Activated CD8-positive, alpha-beta memory T cell treated with anti-CD3 and anti-CD28 coated beads, Interleukin-2, amount 10 ng/mL, durations not matched to agents 7 days and 5 days (primary cell): ENCODE measurements at regions of chr6 and their contacts with region 1.

Region 1: GRCh38 chr6:105388152-105388791 is 14.6 kb downstream of the PREP start:
- DNase-seq: no peak
- ATAC-seq: no peak
- H3K4me3 Mint-ChIP-seq: no peak overlapping the region
- H3K27ac Mint-ChIP-seq: no peak overlapping the region
- H3K4me1 Mint-ChIP-seq: peaks cover 12% of the 10 kb centered on the region
- H3K27me3 Mint-ChIP-seq: no peaks in the 10 kb centered on the region

Region 2: DNA sequence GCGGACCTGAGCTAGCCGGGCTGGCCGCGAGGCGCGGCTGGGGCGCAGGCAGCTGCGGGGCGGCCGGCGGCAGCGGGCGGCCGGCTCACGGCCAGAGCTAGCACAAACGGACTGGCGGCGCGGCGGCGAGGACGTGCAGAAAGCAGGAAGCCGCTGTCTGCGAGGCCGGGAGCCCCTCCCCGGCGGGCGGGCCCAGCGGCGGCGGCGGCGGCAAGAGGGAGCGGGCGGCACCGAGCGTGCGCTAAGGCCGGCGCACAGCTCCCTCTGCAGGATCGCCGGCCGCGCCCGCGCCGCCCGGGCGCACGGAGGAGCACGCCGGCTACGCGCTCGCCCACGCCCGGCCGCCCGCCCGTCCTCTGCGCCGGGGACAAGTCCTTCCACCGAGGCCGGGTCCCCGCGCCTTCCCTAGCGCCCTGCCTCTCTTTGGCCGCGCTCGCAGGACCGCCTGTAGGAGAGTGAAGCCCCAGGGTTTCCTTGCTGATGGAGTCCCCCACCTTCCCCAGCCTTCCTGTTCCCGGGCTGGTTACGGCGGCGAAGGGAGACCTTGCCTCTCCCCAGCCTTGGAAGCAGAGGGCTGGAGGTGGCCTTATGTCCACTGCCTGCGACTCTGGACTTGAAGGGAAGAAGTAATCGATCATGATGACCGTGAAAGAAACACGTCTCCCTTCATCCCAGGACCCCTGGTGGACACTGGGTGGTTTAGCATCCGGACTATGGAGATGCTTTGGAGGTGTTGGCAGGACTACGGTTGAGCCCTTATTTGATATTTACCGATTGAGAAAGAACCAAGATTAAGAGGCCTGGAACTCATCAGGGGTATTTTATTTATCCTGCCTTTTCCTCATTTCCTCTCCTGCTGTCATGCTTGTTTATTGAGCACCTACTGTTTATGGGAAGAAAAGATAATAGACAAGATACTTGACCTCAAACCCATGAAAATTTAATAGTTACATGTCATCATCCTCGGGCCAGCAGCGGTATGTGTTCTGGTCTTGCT is 15.0 kb after region 1 on chr6 and contains the start of gene PREP:
- CTCF ChIA-PET with region 1: interaction called, 14 read pairs
- DNase-seq: peak; percentile 89
- ATAC-seq: peak; percentile 95
- H3K4me3 Mint-ChIP-seq: peak within 1 kb of the TSS; percentile 86
- H3K27ac Mint-ChIP-seq: peak within 1 kb of the TSS; percentile 79
- H3K4me1 Mint-ChIP-seq: peaks cover 51% of the 10 kb centered on the region
- H3K27me3 Mint-ChIP-seq: peaks cover 13% of the 10 kb centered on the region
- total RNA-seq, gene PREP: 44.1 to 52.9 TPM

Region 3: DNA sequence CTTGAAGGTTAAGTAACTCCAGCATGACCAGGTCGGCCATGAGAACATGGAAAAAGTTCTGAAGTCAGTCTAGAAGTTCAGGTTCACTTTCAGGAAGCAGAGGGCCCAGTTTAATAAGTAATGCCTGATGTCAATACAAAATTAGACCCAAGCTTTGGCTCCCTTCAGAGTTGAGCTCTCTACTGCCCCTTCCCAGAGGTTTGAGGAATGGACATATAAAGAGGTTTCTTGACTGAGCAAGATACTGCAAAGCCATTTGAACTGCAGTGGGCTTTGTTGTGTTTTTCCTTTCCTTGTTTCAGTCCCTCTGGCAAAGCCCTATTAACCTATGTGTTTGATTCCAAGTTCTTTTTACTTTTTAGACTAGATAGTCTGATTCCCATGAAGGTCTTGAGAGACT is 112.4 kb after region 1 on chr6:
- CTCF ChIA-PET with region 1: no interaction called
- DNase-seq: no peak
- ATAC-seq: no peak
- H3K4me3 Mint-ChIP-seq: no peak overlapping the region
- H3K27ac Mint-ChIP-seq: no peak overlapping the region
- H3K4me1 Mint-ChIP-seq: no peaks in the 10 kb centered on the region
- H3K27me3 Mint-ChIP-seq: no peaks in the 10 kb centered on the region